ENCODE measurements at regions of chr1 and their contacts with region 1.

Region 1: DNA sequence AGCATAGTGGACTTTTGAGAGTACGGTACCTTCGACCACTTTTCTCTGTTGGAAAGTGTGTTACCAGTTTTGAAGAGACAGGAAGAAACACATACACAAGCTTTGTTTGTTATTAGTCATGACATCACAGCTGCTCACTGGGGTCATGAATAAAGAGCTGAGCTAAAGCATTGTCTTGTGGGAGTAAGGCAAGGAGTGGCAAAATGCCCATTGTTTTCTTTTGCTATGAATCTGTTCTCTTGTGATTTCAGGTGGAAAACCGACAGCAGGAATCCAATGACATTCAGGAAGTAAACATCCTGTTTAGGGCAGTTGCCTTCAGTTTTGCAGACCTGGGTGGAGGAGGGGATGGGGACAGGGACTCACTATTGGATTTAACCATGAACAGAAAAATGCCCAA is 66.2 kb downstream of the RGL1 start:
- DNase-seq: no peak

Region 2: GRCh38 chr1:183804881-183805841 is 66.0 kb before region 1 on chr1 and contains the start of gene RGL1:
- intact Hi-C with region 1: loop called (anchors 5 kb)
- DNase-seq: peak; percentile 81
- total RNA-seq, gene RGL1: 19.6 TPM

Region 3: DNA sequence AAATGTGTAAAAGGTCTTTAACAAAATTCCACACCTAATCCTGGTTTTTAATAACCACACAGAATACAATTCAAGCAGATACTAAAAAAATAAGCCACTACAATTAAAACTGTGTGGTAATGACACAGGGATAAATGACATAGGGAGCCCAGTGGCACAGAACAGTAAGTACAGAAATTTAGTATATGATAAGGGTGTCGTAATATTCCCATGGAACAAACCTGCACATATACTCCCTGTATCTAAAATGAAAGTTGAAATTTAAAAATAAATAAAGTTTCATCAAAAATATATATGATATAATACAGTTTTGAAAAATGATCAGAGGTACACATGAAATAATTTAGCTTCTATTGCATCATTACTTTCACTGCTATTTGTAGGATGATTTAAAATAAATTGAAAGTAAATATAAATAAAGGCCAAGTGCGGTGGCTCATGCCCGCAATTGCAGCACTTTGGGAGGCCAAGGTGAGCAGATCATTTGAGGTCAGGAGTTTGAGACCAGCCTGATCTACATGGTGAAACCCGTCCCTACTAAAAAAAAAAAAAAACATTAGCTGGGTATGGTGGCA is 109.9 kb after region 1 on chr1:
- intact Hi-C with region 1: no loop called
- DNase-seq: no peak

Region 4: DNA sequence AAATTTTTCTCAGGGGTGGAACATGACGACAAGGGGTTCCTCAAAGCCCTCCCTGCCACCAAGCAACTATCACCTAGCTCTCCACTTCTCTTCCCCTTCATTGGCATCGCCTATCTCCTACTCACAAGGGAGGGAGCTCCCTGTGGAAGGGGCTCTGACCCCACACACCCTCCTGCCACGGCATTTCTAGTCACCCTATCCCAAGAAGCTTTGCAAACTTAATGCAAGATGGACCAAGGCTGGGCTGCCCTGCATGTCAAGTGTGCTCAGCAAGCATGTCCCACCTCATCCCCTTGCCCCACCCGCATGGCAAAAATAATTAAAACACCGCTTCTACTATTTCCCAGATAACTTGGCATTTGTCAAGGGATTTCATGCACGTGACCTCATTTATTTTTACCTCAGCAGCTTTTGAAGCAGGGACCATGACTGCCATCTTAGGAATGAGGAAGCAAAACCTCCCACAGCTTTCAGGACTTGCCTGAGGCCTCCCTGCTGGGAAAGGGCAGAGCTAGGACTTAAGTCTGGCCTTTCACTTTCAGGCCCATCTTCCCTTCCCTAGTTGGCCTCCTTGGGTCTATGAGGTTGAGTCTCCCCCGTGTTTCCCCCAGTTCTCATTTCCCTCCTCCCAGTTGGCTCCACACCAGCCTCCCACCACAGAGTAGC is 341.6 kb after region 1 on chr1:
- intact Hi-C with region 1: no loop called
- DNase-seq: no peak

Measured in cardiac septum (tissue), 1 donor.